Right cardiac atrium (tissue), 5 donors: ENCODE measurements at regions of chr17 and their contacts with region 1.

Region 1: DNA sequence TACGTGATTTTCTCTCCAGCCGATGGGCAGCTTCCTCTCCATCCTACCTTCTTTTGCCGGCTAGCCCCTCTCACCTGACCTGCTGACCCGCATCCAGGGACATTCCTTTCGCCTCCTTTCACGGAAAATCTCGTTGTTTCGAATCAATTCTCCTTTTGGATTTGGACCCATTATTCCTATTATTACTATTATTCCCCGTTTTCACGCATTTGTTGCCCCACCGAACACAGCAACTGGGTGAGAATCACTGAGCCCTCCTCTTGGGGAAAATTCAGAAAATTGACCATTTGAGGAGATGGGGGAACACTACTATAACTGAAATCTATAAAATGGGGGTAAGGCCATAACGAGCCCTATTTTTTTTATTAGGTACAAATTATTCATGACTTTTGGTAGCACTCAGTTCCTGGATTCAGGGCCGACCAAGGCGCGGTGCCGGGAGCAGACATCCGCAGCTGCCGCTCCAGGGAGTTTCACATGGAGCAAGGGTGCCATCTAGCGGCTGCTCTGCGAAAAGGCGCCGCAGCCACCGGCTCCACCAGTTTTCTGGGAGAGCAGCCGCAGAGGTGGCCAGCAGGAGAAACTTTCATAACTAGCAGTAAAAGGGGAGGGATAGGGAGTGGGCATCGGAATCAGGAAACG is 3.3 kb upstream of the HOXB8 start:
- DNase-seq: peak; percentile 85 to 94 (median 94)
- ATAC-seq: peak; percentile 83 to 91
- H3K4me3 ChIP-seq: no peak overlapping the region
- H3K27ac ChIP-seq: no peak overlapping the region
- H3K4me1 ChIP-seq: no peaks in the 10 kb centered on the region
- H3K27me3 ChIP-seq: no peaks in the 10 kb centered on the region

Region 2: DNA sequence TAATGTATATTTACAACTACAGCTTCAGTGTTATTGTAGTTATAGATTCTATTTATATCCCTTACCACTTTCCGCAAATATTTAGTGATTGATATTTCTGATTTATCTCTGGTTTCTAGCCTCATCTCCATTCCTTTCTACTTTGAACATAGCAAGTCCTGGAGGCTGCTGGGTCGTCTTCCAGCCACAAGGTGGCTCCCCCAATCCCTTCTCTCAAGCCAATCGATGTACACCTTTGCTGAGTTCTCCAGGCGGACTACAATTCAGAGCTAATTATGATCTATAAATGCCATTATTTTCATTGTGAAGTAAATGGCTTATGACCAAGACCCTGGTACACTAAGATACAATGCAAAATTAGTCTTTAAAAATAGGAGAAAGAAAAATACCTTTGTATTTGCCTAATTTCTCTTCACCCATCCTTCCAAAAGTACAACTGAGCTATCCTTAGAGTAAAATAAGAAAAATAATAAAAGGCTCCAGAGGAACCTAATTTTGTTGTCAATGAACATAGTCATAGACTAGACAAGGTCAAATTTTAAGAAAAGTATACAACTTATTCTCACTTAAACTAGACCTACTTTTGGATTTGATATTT is 310.5 kb before region 1 on chr17:
- intact Hi-C with region 1: loop called in 1 of 4 experiments (anchors 10 kb)
- DNase-seq: peak in 2 of 3 donors; percentile 54 to 60
- ATAC-seq: no peak
- H3K4me3 ChIP-seq: no peak overlapping the region
- H3K27ac ChIP-seq: no peak overlapping the region
- H3K4me1 ChIP-seq: no peaks in the 10 kb centered on the region
- H3K27me3 ChIP-seq: peaks cover 2% of the 10 kb centered on the region

Region 3: GRCh38 chr17:48335858-48336500 is 282.4 kb before region 1 on chr17:
- intact Hi-C with region 1: loop called in 1 of 4 experiments (anchors 5 kb)
- DNase-seq: no peak
- ATAC-seq: no peak
- H3K4me3 ChIP-seq: no peak overlapping the region
- H3K27ac ChIP-seq: no peak overlapping the region
- H3K4me1 ChIP-seq: no peaks in the 10 kb centered on the region
- H3K27me3 ChIP-seq: peaks cover 7% of the 10 kb centered on the region

Region 4: DNA sequence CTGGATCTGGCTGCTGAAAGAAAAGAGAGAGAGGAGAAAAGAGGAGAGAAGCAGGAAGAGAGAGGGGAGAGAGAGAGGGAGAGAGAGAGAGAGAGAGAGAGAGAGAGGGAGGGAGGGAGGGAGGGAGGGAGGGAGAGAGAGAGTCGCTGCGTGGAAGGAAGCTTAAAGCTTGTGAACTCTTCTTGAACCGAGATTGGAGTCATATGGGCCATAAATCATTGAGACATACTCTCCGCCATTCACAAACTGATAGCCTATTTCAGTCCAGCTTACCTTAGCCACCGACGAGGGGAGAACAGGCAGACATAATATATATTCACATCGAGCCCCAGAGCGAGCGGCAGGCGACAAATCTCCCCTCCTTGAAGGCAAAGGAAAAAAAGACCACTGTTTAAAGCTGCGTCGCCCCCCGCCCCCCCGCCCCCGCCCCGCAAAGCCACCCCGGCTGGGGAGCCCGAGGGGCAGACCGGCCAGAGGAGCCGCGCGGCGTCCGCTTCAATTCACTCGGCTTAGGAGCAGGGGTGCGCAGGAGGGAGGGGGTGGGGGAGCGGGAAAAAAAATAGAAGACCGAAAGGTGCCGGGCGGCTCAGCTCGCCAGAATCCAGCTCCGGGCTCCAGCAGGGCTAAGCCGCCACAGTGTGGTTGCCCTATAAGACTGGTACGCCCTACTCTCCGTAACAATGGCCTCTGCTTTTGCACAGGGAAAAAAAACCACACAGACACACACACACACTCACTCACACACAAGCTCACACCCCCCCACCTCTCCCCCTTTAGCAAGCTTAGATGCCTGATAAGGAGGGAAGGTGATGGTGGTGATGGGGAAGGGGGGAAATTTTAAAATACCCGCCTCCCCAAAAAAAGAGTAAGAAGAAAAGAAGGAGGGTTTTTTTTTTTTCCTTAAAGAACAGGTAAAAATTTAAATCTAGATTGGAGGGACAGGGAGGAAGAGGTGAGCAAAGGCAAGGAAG is 62.8 kb before region 1 on chr17:
- intact Hi-C with region 1: no loop called
- DNase-seq: no peak
- ATAC-seq: peak; percentile 24 to 44
- H3K4me3 ChIP-seq: peak overlapping the region; percentile 67
- H3K27ac ChIP-seq: peak overlapping the region; percentile 17
- H3K4me1 ChIP-seq: peaks cover 1% of the 10 kb centered on the region
- H3K27me3 ChIP-seq: no peaks in the 10 kb centered on the region